Head of caudate nucleus (tissue), 42 donors: ENCODE measurements at regions of chr1 and their contacts with region 1.

Region 1: GRCh38 chr1:167442124-167442848 is 76.0 kb downstream of the CD247 start:
- DNase-seq: peak; percentile 71 to 95 (median 87)

Region 2: DNA sequence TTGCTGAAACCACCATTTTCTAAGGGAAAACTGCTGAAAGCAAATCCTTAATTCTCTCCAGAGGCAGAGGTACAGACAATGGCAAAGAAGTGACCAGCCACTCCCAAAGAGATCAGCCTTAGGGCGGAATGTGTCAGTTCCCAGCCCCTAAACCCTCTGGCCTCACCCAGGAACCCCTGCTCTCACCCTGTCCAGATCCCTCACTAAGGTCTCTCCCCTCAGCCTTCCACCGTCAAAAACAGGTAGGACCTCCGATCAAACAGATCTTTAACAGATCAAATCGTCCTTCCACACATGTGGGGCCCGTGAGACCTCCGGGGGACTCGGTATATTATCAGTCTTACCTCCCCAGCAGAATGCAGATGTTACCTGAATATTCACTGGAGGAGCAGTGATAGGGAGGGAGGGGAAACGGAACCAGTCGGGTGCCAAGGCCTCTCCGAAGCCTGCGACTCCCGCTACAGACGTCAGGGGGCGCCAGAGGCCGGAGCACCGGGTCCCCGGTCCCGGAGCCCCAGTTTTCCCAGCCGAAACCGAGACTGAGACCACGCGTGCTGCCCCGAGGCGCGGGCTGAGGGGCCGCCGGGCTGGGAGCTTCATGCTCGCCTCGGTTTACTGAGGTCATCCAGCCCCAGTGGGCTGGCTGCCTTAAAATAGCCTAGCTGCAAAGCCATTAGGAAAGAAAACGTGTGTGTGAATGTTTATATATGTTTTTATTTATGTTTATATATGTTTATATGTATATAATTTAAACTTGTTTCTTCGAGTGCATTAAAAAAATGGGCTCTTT is 375.8 kb before region 1 on chr1:
- intact Hi-C with region 1: loop called (anchors 5 kb)
- DNase-seq: peak; percentile 67 to 94 (median 87)

Region 3: GRCh38 chr1:167263819-167264464 is 178.3 kb before region 1 on chr1:
- intact Hi-C with region 1: loop called (anchors 2 kb)
- DNase-seq: no peak

Region 4: DNA sequence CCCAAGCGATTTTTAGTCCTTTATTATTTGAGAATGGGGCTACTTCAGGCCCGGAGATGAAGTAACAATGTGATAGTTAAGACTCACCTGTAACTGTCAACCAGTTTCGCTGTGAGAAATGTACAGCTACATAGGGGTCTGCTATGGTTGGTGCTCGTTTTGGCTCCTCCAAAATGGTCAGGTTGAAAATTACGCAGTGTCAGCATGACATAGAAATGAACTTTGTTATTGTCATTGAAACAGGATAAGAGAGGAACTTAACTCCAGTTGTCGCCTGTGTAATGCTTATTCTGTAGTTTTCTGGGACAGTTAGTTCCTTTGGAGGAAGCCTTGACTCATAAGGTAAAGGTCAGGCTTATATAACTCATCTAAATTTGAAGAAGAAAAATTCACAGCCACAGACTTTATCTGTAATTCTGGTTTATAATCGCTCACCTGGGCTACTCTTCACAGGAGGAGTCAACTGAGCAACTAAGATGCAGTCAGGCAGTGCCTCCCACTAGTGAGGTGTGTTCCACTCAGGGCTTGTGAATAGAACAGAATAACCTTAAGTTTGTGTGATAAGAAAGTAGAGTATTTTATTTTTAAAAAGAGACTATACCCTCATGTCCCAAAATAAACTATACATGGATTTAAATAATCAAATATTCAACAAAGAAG is 54.9 kb before region 1 on chr1:
- intact Hi-C with region 1: no loop called
- DNase-seq: no peak

Region 5: DNA sequence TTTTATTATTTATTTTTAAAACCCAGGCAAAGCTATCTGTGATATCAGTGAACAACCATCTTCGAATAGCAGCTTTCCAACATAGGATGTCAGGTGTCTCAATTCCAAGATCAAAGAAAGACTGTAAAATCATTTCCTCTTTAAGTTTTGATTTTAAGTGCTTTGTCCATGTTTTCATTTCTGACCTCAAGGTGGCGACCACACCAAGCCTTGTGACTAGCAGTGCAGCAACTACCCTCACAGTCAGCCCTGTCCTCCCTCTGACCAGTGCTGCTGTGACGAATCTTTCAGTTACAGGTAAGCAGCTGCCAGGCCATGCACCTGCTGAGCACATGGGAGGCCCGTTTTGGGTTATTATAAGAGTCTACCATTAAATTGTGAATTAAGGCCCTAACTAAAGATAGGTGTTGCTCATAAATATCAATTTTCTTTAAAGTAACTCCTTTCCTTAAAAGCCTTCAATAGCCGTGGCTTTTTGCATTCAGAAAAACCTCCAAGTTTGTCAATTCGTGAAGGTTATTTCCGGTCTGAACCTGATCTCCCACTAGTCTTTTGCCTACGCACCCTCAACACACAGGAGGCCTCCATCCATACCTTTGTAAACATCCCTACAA is 40.9 kb before region 1 on chr1:
- intact Hi-C with region 1: loop called (anchors 2 kb)
- DNase-seq: peak in 20 of 42 donors; percentile 20 to 70 (median 38)

Region 6: DNA sequence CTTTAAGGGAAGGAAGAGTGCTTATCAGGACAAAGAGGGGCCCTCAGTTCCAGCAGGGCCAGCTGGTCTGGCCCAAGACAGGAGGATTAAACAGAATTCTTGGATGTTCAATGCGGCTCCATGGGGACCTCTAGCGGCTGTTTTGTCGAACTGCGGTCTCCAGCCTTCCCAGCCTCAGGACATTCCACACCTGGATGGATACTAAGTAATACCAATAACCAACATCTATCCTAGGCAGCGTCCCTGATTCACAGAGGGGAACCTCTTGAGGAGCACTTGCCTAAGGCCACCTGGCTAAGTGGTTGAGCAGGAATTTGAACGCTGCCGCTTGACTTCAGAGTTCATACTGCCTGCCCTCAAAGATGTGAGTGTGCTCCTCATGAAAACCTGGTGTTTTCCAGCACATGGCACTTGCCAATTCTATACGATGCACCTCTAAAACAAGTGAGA is 91.6 kb after region 1 on chr1:
- intact Hi-C with region 1: loop called (anchors 10 kb)
- DNase-seq: peak; percentile 35 to 92 (median 77)